Tibial artery (tissue), 4 donors: ENCODE measurements at regions of chr9 and their contacts with region 1.

Region 1: GRCh38 chr9:124617471-124618141 is 110.4 kb upstream of the NR5A1 start:
- DNase-seq: peak; percentile 79 to 82
- H3K4me3 ChIP-seq: no peak overlapping the region
- H3K27ac ChIP-seq: no peak overlapping the region
- H3K4me1 ChIP-seq: no peaks in the 10 kb centered on the region
- H3K27me3 ChIP-seq: peaks cover 0 to 2% of the 10 kb centered on the region in 2 donors
- CTCF ChIP-seq: peak; percentile 87 to 91

Region 2: GRCh38 chr9:124549016-124549415 is 68.6 kb before region 1 on chr9:
- intact Hi-C with region 1: no loop called
- DNase-seq: no peak
- H3K4me3 ChIP-seq: no peak overlapping the region
- H3K27ac ChIP-seq: no peak overlapping the region
- H3K4me1 ChIP-seq: no peaks in the 10 kb centered on the region
- H3K27me3 ChIP-seq: no peaks in the 10 kb centered on the region
- CTCF ChIP-seq: no peak

Region 3: GRCh38 chr9:124710766-124711165 is 93.2 kb after region 1 on chr9:
- intact Hi-C with region 1: loop called (anchors 2 kb)
- DNase-seq: no peak
- H3K4me3 ChIP-seq: no peak overlapping the region
- H3K27ac ChIP-seq: no peak overlapping the region
- H3K4me1 ChIP-seq: peaks cover 0 to 6% (median 0%) of the 10 kb centered on the region in 4 donors
- H3K27me3 ChIP-seq: no peaks in the 10 kb centered on the region
- CTCF ChIP-seq: no peak